ENCODE measurements at regions of chr5 and their contacts with region 1.

Region 1: DNA sequence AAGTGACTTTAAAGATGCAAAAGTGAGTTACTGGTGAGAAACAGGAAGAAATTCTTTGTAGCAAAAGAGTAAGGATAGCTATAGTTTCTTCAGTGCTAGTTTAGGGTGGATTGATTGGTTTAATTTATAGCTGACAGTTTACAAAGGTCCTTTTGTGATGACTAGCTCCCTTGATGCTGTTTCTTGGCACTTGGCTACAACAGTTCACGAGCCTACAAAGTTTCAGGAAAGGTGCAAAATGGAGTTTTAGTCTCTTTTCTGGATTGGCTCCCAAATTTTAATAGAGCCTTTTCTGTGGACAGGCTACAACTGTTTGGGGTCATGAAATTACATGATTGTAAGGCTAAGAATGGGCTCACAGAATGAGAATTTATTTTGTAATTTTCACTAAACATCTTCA is 40.9 kb upstream of the BNIP1 start:
- DNase-seq: no peak
- ATAC-seq: no peak
- H3K4me3 ChIP-seq: no peak overlapping the region
- H3K4me3 Mint-ChIP-seq: no peak overlapping the region
- H3K27ac ChIP-seq: no peak overlapping the region
- H3K27ac Mint-ChIP-seq: no peak overlapping the region
- H3K4me1 ChIP-seq: peaks cover 22% of the 10 kb centered on the region
- H3K4me1 Mint-ChIP-seq: peaks cover 48% of the 10 kb centered on the region
- H3K27me3 ChIP-seq: no peaks in the 10 kb centered on the region
- H3K27me3 Mint-ChIP-seq: no peaks in the 10 kb centered on the region
- CTCF ChIP-seq: no peak

Region 2: DNA sequence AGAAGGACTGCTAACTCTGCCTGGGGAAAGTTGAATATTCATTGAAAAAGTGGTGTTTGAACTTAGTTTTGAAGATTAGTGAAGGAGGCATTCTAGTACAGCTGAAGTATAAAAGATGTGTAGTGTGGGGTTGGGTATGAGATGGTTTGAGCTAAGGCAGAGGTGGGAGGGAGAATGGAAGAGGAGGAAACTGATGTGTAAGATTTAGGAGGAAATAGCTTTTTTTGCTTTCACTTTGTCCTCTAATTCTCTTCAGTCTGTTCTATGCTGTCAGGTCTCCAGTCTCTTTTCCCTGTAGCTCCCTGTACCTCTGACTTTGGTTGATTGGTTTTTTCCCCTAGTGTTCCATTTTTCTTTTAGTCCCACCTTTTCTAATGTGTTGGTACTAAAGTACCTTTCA is 38.3 kb before region 1 on chr5:
- CTCF ChIA-PET with region 1: no interaction called
- POLR2A ChIA-PET with region 1: no interaction called
- intact Hi-C with region 1: loop called in 1 of 2 experiments (anchors 5 kb)
- DNase-seq: peak in 2 of 9 experiments; percentile 10 to 29
- ATAC-seq: peak; percentile 56
- H3K4me3 ChIP-seq: no peak overlapping the region
- H3K4me3 Mint-ChIP-seq: peak overlapping the region; percentile 59
- H3K27ac ChIP-seq: peak overlapping the region in 1 of 2 experiments; percentile 33
- H3K27ac Mint-ChIP-seq: peak overlapping the region; percentile 86
- H3K4me1 ChIP-seq: peaks cover 40% of the 10 kb centered on the region
- H3K4me1 Mint-ChIP-seq: peaks cover 71% of the 10 kb centered on the region
- H3K27me3 ChIP-seq: no peaks in the 10 kb centered on the region
- H3K27me3 Mint-ChIP-seq: no peaks in the 10 kb centered on the region
- CTCF ChIP-seq: no peak

Region 3: DNA sequence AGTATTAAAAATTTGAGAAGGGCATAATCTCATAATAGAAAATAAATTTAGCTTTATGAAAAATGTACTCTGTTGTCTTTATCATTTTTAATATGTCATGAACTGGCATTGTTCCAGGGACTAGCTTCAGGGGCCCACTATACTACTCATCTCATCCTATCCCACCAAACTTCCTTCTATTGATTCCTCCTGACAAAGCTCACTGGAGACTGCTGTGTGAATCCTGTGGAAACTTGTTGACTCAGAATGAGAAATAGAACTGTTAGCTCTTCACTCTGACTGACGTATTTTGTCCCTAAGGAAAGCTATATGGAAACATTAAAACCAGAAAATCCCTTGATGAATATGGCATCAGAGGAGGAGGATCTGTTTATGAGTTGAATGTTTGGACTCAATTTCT is 11.1 kb after region 1 on chr5:
- CTCF ChIA-PET with region 1: no interaction called
- POLR2A ChIA-PET with region 1: no interaction called
- intact Hi-C with region 1: no loop called
- DNase-seq: no peak
- ATAC-seq: no peak
- H3K4me3 ChIP-seq: no peak overlapping the region
- H3K4me3 Mint-ChIP-seq: no peak overlapping the region
- H3K27ac ChIP-seq: no peak overlapping the region
- H3K27ac Mint-ChIP-seq: peak overlapping the region; percentile 58
- H3K4me1 ChIP-seq: no peaks in the 10 kb centered on the region
- H3K4me1 Mint-ChIP-seq: peaks cover 2% of the 10 kb centered on the region
- H3K27me3 ChIP-seq: no peaks in the 10 kb centered on the region
- H3K27me3 Mint-ChIP-seq: no peaks in the 10 kb centered on the region
- CTCF ChIP-seq: no peak